Activated naive CD4-positive, alpha-beta T cell treated with anti-CD3 and anti-CD28 coated beads for 36 hours (primary cell): ENCODE measurements at regions of chr11 and their contacts with region 1.

Region 1: GRCh38 chr11:119236490-119236889 is 30.4 kb downstream of the CBL start:
- DNase-seq: no peak
- H3K4me3 Mint-ChIP-seq: no peak overlapping the region
- H3K27ac Mint-ChIP-seq: no peak overlapping the region
- H3K4me1 Mint-ChIP-seq: peaks cover 49% of the 10 kb centered on the region
- H3K27me3 Mint-ChIP-seq: no peaks in the 10 kb centered on the region

Region 2: DNA sequence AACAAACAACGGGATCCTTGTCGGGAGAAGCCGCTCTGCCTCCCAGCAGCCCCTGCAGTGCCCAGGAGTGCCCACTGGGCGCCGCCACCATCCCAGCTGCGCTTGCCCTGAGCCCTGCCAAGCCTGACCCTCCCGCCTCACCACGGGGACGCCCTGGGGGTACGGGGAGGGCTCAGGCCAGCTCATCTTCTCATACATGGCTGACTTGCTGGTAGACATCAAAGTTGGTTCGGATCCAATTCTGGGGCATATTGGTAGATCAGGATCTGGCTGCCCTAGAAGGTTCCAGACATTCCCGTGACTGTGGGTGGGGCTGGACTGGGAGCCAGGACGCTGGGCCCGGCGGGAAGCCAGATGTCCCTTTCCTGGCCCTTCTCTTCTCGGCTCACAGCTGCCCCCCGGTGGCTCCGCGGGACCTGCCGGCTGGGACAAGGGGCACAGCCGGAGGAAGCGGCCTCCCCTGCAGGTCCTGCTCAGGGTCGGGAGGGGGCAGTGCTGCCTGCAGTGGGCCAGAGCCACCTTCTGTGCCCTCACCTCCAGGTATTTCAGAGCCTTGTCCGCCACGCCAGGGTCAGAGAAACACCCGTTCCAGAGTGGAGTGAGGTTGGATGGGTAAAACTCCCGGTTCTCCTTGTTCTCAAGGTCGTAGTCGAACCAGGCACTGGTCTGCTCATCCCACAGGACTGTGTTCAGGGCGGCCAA is 546.5 kb before region 1 on chr11:
- CTCF ChIA-PET with region 1: no interaction called
- intact Hi-C with region 1: no loop called
- DNase-seq: peak; percentile 96
- H3K4me3 Mint-ChIP-seq: peak overlapping the region; percentile 77
- H3K27ac Mint-ChIP-seq: peak overlapping the region; percentile 82
- H3K4me1 Mint-ChIP-seq: peaks cover 46% of the 10 kb centered on the region
- H3K27me3 Mint-ChIP-seq: no peaks in the 10 kb centered on the region

Region 3: DNA sequence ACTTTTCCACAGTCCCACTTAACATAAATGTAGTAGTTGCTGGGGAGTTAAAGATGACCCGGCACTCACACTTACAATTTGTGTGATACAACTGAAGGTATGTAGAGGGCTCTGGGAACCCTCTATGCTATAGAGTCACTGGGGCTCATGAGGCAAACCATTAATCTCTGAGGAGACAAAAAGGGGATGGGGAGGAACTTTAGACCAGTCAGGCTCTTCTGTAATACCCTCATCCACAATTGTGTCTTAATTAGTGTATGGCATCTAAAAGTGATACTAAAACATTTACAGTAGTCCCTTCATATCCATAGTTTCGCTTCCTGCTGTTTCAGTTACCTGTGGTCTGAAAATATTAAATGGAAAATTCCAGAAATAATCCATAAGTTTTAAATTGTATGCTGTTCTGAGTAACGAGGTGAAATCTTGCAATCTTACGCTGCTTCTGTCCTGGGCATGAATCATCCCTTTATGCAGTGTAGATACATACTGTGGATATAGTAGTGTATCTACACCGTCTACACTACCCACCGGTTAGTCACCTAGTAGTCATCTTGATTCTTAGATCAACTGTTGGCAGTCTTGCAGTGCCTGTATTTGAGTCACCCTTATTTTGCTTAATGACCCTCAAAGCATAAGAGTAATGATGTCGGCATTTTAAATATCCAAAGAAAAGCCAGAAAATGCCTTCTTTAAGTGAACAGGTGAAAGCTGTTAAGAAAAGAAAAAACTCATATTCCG is 18.2 kb before region 1 on chr11:
- CTCF ChIA-PET with region 1: interaction called, 3 read pairs
- intact Hi-C with region 1: loop called (anchors 1 kb)
- DNase-seq: peak; percentile 37
- H3K4me3 Mint-ChIP-seq: no peak overlapping the region
- H3K27ac Mint-ChIP-seq: peak overlapping the region; percentile 33
- H3K4me1 Mint-ChIP-seq: peaks cover 57% of the 10 kb centered on the region
- H3K27me3 Mint-ChIP-seq: no peaks in the 10 kb centered on the region

Region 4: GRCh38 chr11:119249671-119250010 is 13.2 kb after region 1 on chr11:
- CTCF ChIA-PET with region 1: interaction called, 3 read pairs
- intact Hi-C with region 1: loop called (anchors 1 kb)
- DNase-seq: no peak
- H3K4me3 Mint-ChIP-seq: no peak overlapping the region
- H3K27ac Mint-ChIP-seq: no peak overlapping the region
- H3K4me1 Mint-ChIP-seq: peaks cover 51% of the 10 kb centered on the region
- H3K27me3 Mint-ChIP-seq: no peaks in the 10 kb centered on the region

Region 5: DNA sequence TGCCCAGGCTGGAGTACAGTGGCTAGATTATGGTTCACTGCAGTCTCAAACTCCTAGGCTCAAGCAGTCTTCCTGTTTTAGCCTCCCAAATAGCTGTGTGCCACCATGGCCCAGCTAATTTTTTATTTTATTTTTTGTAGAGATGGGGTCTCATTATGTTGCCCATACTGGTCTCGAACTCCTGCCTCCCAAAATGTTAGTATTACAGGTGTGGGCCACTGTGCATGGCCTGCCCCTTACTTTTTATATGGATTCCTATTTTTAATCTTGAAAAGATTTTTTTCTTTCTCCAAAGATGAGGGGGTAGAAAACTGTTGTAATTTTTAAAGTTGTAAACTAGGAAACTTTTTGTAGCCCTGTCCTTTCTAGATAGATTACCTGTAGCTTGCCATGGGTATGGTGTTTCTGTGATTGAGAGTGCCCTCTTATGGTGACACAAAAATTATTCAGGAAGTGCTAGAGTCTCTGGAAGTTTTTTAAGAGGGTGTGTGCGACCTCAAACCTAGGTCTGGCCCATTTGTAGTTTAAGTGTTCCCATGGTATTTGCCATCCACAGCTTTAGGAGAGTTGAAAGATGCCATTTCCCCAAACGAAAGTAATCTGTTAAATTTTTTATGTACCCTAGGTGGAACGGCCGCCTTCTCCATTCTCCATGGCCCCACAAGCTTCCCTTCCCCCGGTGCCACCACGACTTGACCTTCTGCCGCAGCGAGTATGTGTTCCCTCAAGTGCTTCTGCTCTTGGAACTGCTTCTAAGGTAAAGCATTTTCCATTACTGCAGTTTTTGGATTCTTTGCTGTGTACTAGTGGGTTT is 48.1 kb after region 1 on chr11:
- CTCF ChIA-PET with region 1: interaction called, 4 read pairs
- intact Hi-C with region 1: loop called (anchors 5 kb)
- DNase-seq: peak; percentile 29
- H3K4me3 Mint-ChIP-seq: no peak overlapping the region
- H3K27ac Mint-ChIP-seq: no peak overlapping the region
- H3K4me1 Mint-ChIP-seq: peaks cover 16% of the 10 kb centered on the region
- H3K27me3 Mint-ChIP-seq: no peaks in the 10 kb centered on the region